ENCODE measurements at regions of chr7 and their contacts with region 1.

Region 1: GRCh38 chr7:94395141-94396036 is 694 bp downstream of the COL1A2 start:
- DNase-seq: no peak
- H3K4me3 ChIP-seq: peak overlapping the region; percentile 26 to 66 (median 52)
- H3K27ac ChIP-seq: peak overlapping the region; percentile 55 to 93 (median 85)
- H3K4me1 ChIP-seq: peaks cover 4 to 35% (median 6%) of the 10 kb centered on the region in 3 donors
- H3K27me3 ChIP-seq: peaks cover 0 to 16% (median 0%) of the 10 kb centered on the region in 4 donors
- CTCF ChIP-seq: peak; percentile 51 to 65 (median 63)
- POLR2A ChIP-seq: peak in 1 of 4 donors; percentile 20

Region 2: DNA sequence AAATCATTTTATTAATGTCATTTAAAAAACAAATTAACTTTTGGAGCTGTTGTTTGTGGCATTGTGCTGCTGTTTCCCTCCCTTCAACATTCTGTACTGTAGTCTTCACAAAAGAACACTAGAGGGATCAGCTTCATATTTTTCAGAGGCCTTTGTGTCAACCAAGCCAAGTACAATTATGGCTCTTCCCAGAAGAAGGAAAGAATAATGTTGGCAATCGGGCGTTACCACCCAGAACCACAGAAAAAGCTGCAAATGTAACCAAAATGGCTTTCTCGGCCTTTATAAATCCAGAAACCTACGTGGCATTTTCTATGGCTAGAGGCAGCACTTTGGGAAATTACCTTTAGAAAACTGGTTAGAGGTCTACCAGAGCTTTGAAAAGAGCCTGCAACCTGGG is 99.5 kb before region 1 on chr7:
- intact Hi-C with region 1: loop called (anchors 5 kb)
- DNase-seq: no peak
- H3K4me3 ChIP-seq: peak overlapping the region in 1 of 4 donors; percentile 15
- H3K27ac ChIP-seq: peak overlapping the region in 3 of 4 donors; percentile 71 to 83 (median 83)
- H3K4me1 ChIP-seq: peaks cover 0 to 33% (median 16%) of the 10 kb centered on the region in 3 donors
- H3K27me3 ChIP-seq: no peaks in the 10 kb centered on the region
- CTCF ChIP-seq: peak in 4 of 6 experiments; percentile 36 to 43 (median 39)
- POLR2A ChIP-seq: no peak

Region 3: DNA sequence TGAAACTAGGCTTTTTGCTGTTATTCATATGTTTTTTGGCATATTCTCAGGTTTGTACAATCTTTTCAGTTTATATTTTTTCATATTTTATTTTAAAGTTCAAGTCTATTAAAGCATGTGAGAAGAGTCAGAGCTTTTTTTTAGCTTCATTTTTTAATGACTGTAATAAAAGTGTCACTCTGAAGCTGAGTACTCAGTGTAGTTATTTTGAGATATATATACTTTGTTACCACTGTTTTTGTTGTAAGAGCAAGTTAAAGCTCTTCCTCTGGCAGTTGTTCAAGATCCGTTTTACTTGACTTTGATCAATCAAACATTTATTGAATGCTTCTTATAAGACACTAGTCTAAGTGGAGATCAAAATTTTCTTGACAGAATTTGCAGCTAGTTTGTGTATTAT is 151.7 kb after region 1 on chr7:
- intact Hi-C with region 1: no loop called
- DNase-seq: no peak
- H3K4me3 ChIP-seq: no peak overlapping the region
- H3K27ac ChIP-seq: no peak overlapping the region
- H3K4me1 ChIP-seq: no peaks in the 10 kb centered on the region
- H3K27me3 ChIP-seq: no peaks in the 10 kb centered on the region
- CTCF ChIP-seq: no peak
- POLR2A ChIP-seq: no peak

Measured in esophagus squamous epithelium (tissue), 5 donors.